Prostate gland (tissue), 2 donors: ENCODE measurements at regions of chr17 and their contacts with region 1.

Region 1: GRCh38 chr17:28763804-28764266 is 20.0 kb downstream of the TRAF4 start:
- DNase-seq: peak; percentile 83
- H3K4me3 ChIP-seq: no peak overlapping the region
- H3K27ac ChIP-seq: no peak overlapping the region
- H3K4me1 ChIP-seq: peaks cover 10% of the 10 kb centered on the region
- H3K27me3 ChIP-seq: no peaks in the 10 kb centered on the region
- CTCF ChIP-seq: peak; percentile 80 to 93 (median 90)
- POLR2A ChIP-seq: no peak

Region 2: GRCh38 chr17:28661635-28662537 is 101.9 kb before region 1 on chr17 and contains the starts of genes SDF2 and SUPT6H:
- intact Hi-C with region 1: no loop called
- DNase-seq: peak; percentile 90
- H3K4me3 ChIP-seq: peak within 1 kb of the TSS; percentile 78 to 84
- H3K27ac ChIP-seq: peak within 1 kb of the TSS; percentile 98 to 99
- H3K4me1 ChIP-seq: peaks cover 8% of the 10 kb centered on the region
- H3K27me3 ChIP-seq: no peaks in the 10 kb centered on the region
- CTCF ChIP-seq: no peak
- POLR2A ChIP-seq: peak; percentile 89
- total RNA-seq, gene SDF2: 53.3 to 80.1 TPM
- total RNA-seq, gene SUPT6H: 52.7 to 138 TPM

Region 3: DNA sequence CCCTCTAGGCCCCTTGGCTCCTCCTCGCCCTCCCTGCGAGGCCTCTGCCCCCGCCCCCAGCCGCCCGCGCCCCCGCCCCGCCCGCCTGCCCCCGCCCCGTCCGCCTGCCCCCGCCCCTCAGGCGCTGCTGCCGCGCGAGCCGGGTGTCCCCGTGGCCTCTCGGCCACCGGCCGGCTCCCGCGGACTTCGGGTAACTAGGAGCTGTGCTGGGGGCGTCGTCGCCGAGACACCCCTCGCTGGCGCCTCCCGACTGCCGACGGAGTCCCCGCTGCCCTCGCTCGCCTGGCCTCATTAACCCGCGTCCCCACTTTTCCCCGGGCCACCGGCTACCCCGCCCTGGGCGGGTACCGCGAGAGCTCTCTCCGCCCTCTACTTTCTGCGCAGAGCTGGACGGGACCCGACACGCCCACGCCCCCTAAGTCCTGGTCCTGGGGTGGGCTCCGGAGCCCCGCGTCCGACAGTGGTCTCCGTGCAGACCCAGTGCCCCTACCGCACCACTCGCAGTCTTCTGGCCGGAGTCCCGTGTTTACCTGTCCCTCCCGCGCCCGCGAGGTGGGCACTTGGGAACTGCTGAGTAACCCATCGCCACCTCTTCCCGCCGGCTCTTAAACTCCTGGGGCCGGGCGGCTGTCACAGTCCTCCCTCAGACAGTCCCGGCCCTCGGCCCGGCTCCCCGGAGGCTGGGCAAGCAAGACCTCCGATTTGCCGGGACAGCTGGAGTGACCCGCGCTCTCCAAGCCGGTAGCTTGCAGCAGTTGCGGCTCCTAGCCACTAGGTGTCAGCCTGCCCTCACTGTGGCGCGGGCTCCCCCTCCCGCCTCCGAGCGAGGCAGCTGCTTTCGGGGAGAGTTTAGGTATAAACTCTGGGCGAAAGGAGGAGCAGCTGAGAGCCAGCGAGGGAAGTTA is 37.4 kb before region 1 on chr17 and contains the start of gene TLCD1:
- intact Hi-C with region 1: no loop called
- DNase-seq: peak; percentile 94
- H3K4me3 ChIP-seq: peak within 1 kb of the TSS; percentile 63 to 76
- H3K27ac ChIP-seq: peak within 1 kb of the TSS; percentile 99
- H3K4me1 ChIP-seq: peaks cover 17% of the 10 kb centered on the region
- H3K27me3 ChIP-seq: no peaks in the 10 kb centered on the region
- CTCF ChIP-seq: peak; percentile 99 to 100 (median 100)
- POLR2A ChIP-seq: no peak
- total RNA-seq, gene TLCD1: 5.3 to 19.6 TPM

Region 4: DNA sequence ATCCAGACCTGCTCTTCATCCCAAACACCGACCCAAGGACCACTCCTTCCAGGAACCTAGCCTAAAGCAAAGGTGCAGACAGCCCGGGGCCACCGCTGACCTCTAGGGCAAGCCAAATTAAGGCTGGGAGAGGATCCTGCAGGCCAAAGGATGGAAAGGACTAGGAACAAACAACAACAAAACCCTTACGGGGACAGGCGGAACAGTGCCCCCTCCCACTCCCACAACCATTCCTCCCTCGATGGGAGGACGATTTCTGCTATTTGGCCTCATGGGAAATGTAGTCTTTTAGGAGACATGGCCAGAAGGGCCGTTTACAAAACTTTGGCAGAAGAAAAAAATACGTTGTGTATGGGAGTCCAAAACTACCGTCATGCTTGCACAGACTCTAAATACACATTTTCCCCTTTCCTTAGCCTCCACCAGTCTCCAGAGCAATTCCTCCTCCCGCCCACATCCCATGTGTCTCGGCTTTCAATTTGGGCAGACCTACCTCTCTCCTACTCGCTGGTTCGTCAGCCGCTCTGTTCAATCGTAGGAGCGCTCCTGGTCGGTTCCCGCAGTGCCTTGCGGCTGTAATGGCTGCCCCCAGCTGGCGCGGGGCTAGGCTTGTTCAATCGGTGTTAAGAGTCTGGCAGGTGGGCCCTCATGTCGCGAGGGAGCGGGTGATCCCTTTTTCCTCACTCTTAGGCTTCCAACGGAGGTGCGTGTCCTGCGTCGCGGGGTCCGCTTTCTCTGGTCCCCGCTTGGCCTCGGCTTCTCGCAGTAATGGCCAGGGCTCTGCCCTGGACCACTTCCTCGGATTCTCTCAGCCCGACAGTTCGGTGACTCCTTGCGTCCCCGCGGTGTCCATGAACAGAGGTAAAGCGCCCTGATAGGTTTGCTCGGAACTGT is 90.9 kb after region 1 on chr17 and contains the start of gene ERAL1:
- intact Hi-C with region 1: loop called (anchors 10 kb)
- DNase-seq: peak; percentile 86
- H3K4me3 ChIP-seq: peak within 1 kb of the TSS; percentile 51 to 63
- H3K27ac ChIP-seq: peak within 1 kb of the TSS; percentile 69 to 74
- H3K4me1 ChIP-seq: peaks cover 5% of the 10 kb centered on the region
- H3K27me3 ChIP-seq: no peaks in the 10 kb centered on the region
- CTCF ChIP-seq: peak in 3 of 4 experiments; percentile 11 to 22 (median 18)
- POLR2A ChIP-seq: peak; percentile 53
- total RNA-seq, gene ERAL1: 49.9 to 70.8 TPM

Region 5: DNA sequence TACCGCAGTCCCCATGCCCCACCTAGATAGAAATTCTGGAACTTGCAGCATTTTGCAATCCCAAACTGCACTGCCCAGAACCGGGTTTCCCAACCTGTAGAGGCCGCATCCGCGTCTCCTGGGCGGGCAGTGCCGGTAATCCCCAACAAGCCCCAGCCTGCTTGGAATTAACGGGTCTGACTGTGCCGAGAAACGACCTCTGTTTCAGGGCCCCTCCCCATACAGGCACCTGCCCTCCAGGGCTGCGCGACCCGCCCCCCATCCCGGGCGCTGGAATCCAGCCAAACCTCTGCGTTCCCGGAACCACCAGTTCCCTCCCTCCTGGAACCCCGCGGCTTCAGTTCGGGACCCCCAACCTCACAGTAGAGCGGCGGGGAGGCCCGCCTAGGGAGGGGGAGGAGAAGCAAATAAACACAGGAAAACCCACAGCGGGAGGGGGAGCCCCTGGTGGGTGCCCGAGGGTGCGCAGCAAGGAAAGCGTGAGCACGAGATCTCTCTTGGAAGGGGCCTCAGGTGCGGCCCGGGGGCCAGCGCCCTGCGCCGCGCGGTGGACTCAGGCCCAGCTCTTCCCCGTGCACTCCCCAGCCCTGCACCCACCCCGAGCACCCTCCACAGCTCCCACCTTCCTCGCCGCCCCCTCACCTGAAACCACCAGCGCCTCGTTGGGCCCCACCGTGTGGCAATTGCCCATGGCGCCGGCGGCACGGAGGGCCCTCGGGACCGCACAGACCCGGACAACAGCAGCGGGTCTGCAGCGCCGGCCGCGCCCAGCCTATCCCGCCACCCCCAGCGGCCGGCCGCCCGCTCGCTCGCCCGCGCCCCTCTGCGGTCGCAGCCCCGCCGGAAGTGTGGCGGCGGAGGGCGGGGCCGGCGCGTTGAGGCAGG is 133.3 kb after region 1 on chr17 and contains the start of gene FLOT2:
- intact Hi-C with region 1: loop called (anchors 5 kb)
- DNase-seq: peak; percentile 91
- H3K4me3 ChIP-seq: peak within 1 kb of the TSS; percentile 95 to 97
- H3K27ac ChIP-seq: peak within 1 kb of the TSS; percentile 96 to 97
- H3K4me1 ChIP-seq: peaks cover 20% of the 10 kb centered on the region
- H3K27me3 ChIP-seq: no peaks in the 10 kb centered on the region
- CTCF ChIP-seq: peak in 1 of 4 experiments; percentile 37
- POLR2A ChIP-seq: peak; percentile 47
- total RNA-seq, gene FLOT2: 82.9 to 121 TPM

Region 6: DNA sequence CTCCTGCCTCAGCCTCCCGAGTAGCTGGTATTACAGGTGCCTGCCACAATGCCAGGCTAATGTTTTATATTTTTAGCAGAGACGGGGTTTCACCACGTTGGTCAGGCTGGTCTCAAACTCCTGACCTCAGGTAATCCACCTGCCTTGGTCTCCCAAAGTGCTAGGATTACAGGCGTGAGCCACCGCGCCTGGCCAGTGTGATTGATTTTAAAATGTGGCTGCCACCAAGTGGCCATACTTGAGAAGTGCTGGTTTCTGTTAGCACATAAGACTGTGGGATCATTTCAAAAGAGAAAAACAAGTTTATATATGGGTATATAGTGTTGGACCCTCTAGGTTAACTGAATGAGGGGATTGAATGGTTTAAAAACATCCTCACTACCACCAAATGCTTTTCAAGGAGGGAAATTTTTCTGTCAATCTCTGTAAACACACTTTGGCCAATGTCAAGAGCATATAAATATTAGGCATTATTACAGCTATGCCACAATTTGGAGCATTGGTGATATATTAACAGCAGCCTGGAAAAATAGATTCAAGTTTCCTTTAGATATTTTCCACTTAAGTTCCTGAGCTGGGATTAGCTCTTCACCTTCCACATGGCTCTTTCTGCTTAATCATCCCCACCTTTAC is 152.6 kb after region 1 on chr17:
- intact Hi-C with region 1: loop called (anchors 5 kb)
- DNase-seq: peak; percentile 53
- H3K4me3 ChIP-seq: no peak overlapping the region
- H3K27ac ChIP-seq: no peak overlapping the region
- H3K4me1 ChIP-seq: no peaks in the 10 kb centered on the region
- H3K27me3 ChIP-seq: no peaks in the 10 kb centered on the region
- CTCF ChIP-seq: peak in 3 of 4 experiments; percentile 66 to 78 (median 69)
- POLR2A ChIP-seq: no peak